HEK293T (cell line): ENCODE measurements at regions of chr12 and their contacts with region 1.

Region 1: DNA sequence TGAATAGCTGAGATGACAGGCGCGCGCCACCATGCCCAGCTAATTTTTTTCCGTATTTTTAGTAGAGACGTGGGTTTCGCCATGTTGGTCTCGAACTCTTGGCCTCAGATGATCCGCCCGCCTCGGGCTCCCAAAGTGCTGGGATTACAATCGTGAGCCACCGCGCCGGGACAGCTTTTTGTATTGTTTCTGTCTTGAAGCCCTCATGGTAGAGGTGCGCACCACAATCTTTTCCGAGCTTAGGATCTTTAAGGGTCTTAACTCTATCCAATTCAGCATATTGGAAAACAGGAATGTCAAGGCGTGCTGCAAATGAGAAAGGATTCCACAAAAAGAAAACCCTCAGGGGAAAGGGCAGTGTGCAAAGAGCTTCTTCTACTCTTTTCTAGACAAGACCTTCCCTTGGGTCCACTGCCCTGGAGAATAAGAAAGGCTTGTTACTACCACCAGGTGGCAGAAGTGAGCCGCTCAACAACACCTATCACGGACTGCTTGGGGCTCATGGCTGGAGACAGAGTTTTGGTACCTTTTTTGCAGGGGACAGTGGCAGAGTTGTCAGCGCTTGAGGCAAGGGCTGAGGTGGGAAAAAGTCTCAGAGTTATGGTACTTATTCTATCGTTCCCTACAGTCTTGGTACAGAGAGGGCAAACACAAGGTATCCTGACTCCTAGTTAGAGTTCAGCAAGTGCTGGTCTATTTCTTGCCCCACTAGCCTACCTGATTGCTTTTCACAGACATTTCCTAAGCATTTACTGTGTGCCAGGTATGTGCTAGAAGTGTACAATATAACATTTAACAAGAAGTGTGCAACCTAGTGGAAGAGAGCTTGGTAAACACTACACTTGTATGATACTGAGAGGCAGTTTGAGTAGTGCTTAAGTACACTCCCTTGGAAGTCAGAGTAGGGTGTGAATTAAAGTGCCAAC is 16.4 kb upstream of the SP7 start:
- DNase-seq: peak; percentile 81

Region 2: GRCh38 chr12:52561880-52562449 is 790.6 kb before region 1 on chr12:
- CTCF ChIA-PET with region 1: no interaction called
- POLR2A ChIA-PET with region 1: no interaction called
- DNase-seq: peak; percentile 34

Region 3: GRCh38 chr12:53418221-53418620 is 65.6 kb after region 1 on chr12:
- CTCF ChIA-PET with region 1: interaction called, 45 read pairs
- POLR2A ChIA-PET with region 1: interaction called, 16 read pairs
- DNase-seq: no peak

Region 4: GRCh38 chr12:53427905-53428594 is 75.5 kb after region 1 on chr12:
- CTCF ChIA-PET with region 1: interaction called, 45 read pairs
- POLR2A ChIA-PET with region 1: interaction called, 4 read pairs
- DNase-seq: no peak

Region 5: GRCh38 chr12:53508534-53509199 is 156.1 kb after region 1 on chr12:
- CTCF ChIA-PET with region 1: interaction called, 12 read pairs
- POLR2A ChIA-PET with region 1: no interaction called
- DNase-seq: peak; percentile 83